ENCODE measurements at regions of chr1 and their contacts with region 1.

Region 1: DNA sequence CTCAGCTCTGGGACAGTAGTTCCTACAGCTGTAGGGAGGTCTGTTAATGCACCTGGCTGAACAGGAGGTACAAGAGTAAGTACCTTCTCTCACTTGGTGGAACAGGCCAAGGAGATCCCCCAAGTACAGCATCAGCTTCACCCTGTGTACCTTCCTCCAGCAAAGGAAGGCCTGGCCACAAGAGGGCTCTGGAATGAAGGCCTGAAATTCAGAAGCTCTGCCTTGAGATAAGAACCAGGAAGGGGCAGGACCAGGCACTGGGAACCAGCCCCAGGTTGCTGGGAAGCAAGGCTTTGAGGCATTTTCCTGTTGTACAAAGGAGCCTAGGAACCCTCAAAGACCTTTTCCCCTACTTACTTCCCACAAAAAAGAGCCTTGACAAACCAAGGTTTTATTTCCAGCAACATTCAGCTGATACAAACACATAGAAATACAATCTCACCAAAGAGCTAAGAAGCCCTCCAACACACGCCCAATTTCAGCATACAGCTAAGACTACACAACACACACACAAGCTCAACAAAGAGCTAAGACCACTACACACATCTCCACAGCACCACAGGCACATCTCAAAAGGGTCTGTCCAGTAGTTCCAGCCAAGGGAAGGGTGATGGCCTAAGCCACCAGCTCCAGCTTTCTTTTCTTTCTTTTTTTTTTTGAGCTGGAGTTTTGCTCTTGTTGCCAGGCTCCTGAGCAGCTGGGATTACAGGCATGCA is 23.5 kb downstream of the F11R start:
- DNase-seq: peak; percentile 81 to 83
- H3K4me3 ChIP-seq: no peak overlapping the region
- H3K4me3 Mint-ChIP-seq: no peak overlapping the region
- H3K27ac Mint-ChIP-seq: peak overlapping the region; percentile 36
- H3K4me1 ChIP-seq: peaks cover 10% of the 10 kb centered on the region
- H3K4me1 Mint-ChIP-seq: peaks cover 7% of the 10 kb centered on the region
- H3K27me3 ChIP-seq: no peaks in the 10 kb centered on the region
- H3K27me3 Mint-ChIP-seq: no peaks in the 10 kb centered on the region
- CTCF ChIP-seq: peak; percentile 53 to 86

Region 2: DNA sequence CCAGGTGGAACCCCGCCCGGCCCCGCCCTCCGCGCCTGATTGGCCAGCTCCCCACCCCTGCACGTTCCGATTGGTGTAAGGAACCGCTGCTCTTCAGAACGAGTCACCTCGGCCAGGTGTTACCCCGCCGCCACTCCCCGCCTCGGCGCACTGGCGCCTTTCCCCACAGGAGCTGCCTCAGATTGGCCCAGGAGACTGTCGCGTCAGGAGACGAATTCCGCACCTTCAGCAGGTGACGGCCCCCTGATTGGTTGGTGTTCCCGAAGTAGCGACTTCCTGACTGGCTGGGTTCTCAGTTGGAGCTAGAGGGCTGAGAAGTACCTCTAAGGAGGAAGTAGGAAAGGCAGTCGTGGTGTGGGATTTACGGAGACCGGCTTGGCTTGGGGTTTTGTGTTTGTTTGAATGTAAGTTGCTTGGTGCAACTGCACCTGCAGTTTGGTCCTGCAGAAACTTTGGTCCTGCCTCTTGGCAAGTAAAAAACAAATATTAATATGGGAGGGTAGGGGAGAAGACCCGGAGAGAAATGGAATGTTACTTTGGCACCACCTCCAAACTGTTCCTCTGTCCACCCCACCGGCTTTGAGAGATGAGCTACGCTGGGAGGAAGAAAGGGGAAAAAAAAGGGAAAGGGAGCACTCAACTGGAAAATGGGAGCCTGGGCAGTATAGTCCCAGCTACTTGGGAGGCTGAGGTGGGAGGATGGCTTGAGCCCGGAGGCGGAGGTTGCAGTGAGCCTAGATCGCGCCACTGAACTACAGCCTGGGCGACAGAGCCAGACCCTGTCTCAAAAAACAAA is 23.9 kb after region 1 on chr1:
- CTCF ChIA-PET with region 1: interaction called, 53 read pairs
- POLR2A ChIA-PET with region 1: interaction called, 43 read pairs
- intact Hi-C with region 1: no loop called
- DNase-seq: peak; percentile 99 to 100
- H3K4me3 ChIP-seq: peak overlapping the region; percentile 67
- H3K4me3 Mint-ChIP-seq: peak overlapping the region; percentile 89
- H3K27ac Mint-ChIP-seq: peak overlapping the region; percentile 97
- H3K4me1 ChIP-seq: peaks cover 38% of the 10 kb centered on the region
- H3K4me1 Mint-ChIP-seq: peaks cover 50% of the 10 kb centered on the region
- H3K27me3 ChIP-seq: no peaks in the 10 kb centered on the region
- H3K27me3 Mint-ChIP-seq: no peaks in the 10 kb centered on the region
- CTCF ChIP-seq: no peak

Region 3: GRCh38 chr1:161045750-161046571 is 48.5 kb after region 1 on chr1 and contains the start of gene USF1:
- CTCF ChIA-PET with region 1: interaction called, 14 read pairs
- POLR2A ChIA-PET with region 1: interaction called, 6 read pairs
- intact Hi-C with region 1: loop called (anchors 1 kb)
- DNase-seq: peak; percentile 94 to 95
- H3K4me3 ChIP-seq: peak within 1 kb of the TSS; percentile 76
- H3K4me3 Mint-ChIP-seq: peak within 1 kb of the TSS; percentile 90
- H3K27ac Mint-ChIP-seq: peak within 1 kb of the TSS; percentile 95
- H3K4me1 ChIP-seq: peaks cover 6% of the 10 kb centered on the region
- H3K4me1 Mint-ChIP-seq: no peaks in the 10 kb centered on the region
- H3K27me3 ChIP-seq: no peaks in the 10 kb centered on the region
- H3K27me3 Mint-ChIP-seq: no peaks in the 10 kb centered on the region
- CTCF ChIP-seq: no peak
- total RNA-seq, gene USF1: 49.7 and 52.7 TPM in 2 replicates

Region 4: GRCh38 chr1:161082991-161083742 is 85.7 kb after region 1 on chr1:
- CTCF ChIA-PET with region 1: interaction called, 11 read pairs
- POLR2A ChIA-PET with region 1: no interaction called
- intact Hi-C with region 1: no loop called
- DNase-seq: peak; percentile 92 to 95
- H3K4me3 ChIP-seq: no peak overlapping the region
- H3K4me3 Mint-ChIP-seq: peak overlapping the region; percentile 9
- H3K27ac Mint-ChIP-seq: peak overlapping the region; percentile 67
- H3K4me1 ChIP-seq: peaks cover 43% of the 10 kb centered on the region
- H3K4me1 Mint-ChIP-seq: peaks cover 37% of the 10 kb centered on the region
- H3K27me3 ChIP-seq: no peaks in the 10 kb centered on the region
- H3K27me3 Mint-ChIP-seq: no peaks in the 10 kb centered on the region
- CTCF ChIP-seq: no peak

Region 5: GRCh38 chr1:161132410-161133219 is 135.1 kb after region 1 on chr1 and contains the start of gene DEDD:
- CTCF ChIA-PET with region 1: interaction called, 11 read pairs
- POLR2A ChIA-PET with region 1: no interaction called
- intact Hi-C with region 1: no loop called
- DNase-seq: peak; percentile 93 to 96
- H3K4me3 ChIP-seq: peak within 1 kb of the TSS; percentile 71
- H3K4me3 Mint-ChIP-seq: no peak within 1 kb of the TSS
- H3K27ac Mint-ChIP-seq: no peak within 1 kb of the TSS
- H3K4me1 ChIP-seq: no peaks in the 10 kb centered on the region
- H3K4me1 Mint-ChIP-seq: peaks cover 10% of the 10 kb centered on the region
- H3K27me3 ChIP-seq: no peaks in the 10 kb centered on the region
- H3K27me3 Mint-ChIP-seq: no peaks in the 10 kb centered on the region
- CTCF ChIP-seq: no peak
- total RNA-seq, gene DEDD: 33.8 and 37.0 TPM in 2 replicates